Thyroid gland (tissue), 4 donors: ENCODE measurements at regions of chr22 and their contacts with region 1.

Region 1: GRCh38 chr22:30079952-30080533 is at the start of gene HORMAD2:
- DNase-seq: no peak
- H3K4me3 ChIP-seq: no peak within 1 kb of the TSS
- H3K27ac ChIP-seq: peak within 1 kb of the TSS in 2 of 3 donors; percentile 67 to 89
- H3K4me1 ChIP-seq: peaks cover 15 to 31% of the 10 kb centered on the region in 2 donors
- H3K27me3 ChIP-seq: no peaks in the 10 kb centered on the region
- CTCF ChIP-seq: no peak
- POLR2A ChIP-seq: no peak
- total RNA-seq, gene HORMAD2: not detected

Region 2: DNA sequence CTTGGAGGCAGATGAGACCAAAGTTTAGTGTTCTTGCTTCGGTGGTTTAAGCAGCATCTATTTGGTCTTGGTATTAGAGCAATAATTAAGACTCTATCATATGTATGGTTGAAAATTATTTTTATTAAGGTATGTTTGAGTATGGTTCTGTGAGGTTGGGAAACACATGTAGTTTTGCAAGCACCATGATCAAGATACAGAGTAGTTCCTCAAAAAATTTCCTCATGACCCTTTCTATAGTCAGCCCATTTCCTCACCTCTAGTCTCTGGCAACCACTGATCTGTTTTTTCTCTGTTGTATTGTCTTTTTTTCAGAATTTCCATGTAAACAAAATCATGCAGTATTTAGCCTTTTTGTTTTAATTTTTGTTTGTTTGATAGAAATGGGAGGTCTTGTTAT is 178.7 kb before region 1 on chr22:
- intact Hi-C with region 1: no loop called
- DNase-seq: no peak
- H3K4me3 ChIP-seq: no peak overlapping the region
- H3K27ac ChIP-seq: no peak overlapping the region
- H3K4me1 ChIP-seq: peaks cover 6 to 16% of the 10 kb centered on the region in 2 donors
- H3K27me3 ChIP-seq: no peaks in the 10 kb centered on the region
- CTCF ChIP-seq: no peak
- POLR2A ChIP-seq: no peak

Region 3: DNA sequence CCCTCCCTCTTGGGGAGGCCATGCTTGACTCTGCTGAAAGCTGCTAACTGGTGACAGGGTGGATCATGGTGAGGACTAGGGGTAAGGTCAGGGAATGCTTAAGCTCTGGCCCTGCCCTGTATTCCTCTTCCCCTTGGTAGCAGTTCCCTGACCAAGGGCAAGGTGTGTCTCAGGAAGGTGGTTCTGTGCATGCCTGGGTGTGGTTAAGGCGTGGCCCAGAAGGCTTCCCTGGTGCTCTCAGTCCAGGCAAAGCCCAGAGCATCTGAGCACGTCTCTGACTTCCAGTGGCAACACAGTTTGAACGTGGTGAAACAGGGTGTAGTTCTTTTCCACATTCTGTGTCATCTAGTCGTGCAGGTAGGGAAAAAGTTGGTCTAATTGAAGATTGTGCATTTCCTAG is 52.9 kb before region 1 on chr22:
- intact Hi-C with region 1: loop called (anchors 10 kb)
- DNase-seq: no peak
- H3K4me3 ChIP-seq: no peak overlapping the region
- H3K27ac ChIP-seq: peak overlapping the region; percentile 22 to 85 (median 84)
- H3K4me1 ChIP-seq: peaks cover 44 to 55% of the 10 kb centered on the region in 2 donors
- H3K27me3 ChIP-seq: no peaks in the 10 kb centered on the region
- CTCF ChIP-seq: no peak
- POLR2A ChIP-seq: no peak